ENCODE measurements at regions of chr9 and their contacts with region 1.

Region 1: DNA sequence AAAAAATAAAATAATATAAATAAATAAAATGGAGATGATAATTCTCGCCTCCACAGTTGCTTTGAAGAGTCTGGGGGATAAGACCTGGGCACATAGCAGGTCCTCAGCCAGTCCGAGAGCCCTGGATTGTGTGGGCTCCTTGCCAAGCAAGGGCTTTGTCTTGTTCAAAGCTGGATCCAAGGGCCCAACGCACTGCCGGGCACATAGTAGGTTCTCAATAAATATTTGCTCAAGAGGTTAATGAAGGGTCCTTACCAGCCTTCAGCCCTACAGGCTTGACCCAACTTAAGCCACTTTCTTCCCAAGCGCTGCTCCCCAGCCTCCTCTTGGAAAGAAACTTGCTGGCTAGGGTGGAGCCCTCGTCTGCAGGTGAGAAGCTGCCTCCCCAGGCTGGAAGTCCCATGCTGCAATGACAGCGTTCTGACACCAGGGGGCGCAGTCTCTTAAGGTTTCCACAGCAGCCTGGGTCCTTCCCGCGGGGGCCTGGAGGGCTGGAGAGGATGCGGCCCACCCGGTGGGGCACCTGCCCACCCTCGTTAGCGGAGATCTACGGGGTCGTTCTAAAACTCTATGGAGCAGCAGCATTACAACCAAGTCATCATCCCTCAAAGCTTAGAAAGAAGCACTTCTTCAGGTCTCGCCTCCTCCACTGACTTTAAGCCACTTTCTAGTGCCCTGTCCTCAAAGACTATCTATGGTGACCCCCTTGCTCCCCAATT is 115.2 kb downstream of the LHX2 start:
- DNase-seq: peak; percentile 8
- H3K4me3 ChIP-seq: no peak overlapping the region
- H3K27ac ChIP-seq: no peak overlapping the region
- H3K4me1 ChIP-seq: no peaks in the 10 kb centered on the region
- H3K27me3 ChIP-seq: peaks cover 0 to 9% (median 0%) of the 10 kb centered on the region in 4 donors
- CTCF ChIP-seq: peak; percentile 94 to 99 (median 96)
- POLR2A ChIP-seq: no peak

Region 2: DNA sequence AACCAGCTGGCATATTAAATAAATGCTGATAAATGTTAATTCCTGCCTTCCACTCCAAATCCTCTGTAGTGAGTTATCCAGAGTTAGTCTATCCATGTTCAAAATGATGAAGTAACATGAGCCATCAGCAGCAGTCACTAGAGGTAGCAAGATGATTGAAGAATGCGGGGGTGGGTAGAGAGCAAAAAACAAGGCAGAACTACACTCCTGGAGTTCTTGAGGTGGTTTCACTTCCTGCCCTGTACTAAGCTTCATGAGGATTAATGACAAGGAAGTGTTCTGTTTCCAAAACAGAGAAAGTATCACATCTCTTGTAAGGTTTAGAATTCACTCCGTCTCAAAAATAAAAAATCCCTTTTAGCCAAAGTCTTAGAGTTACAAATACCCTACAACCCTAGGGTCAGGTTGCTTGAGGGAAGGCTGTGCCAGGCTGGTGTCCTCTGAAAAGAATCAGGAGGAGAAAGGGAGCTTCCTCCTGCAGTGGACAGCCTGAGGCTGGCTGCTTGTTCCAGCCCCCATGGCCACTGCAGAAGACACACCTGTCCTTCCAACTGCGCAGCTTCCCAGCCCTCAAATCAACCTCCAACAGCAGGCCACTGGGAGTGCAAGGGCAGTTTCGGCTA is 377.0 kb before region 1 on chr9:
- intact Hi-C with region 1: no loop called
- DNase-seq: no peak
- H3K4me3 ChIP-seq: no peak overlapping the region
- H3K27ac ChIP-seq: no peak overlapping the region
- H3K4me1 ChIP-seq: peaks cover 0 to 8% (median 0%) of the 10 kb centered on the region in 3 donors
- H3K27me3 ChIP-seq: no peaks in the 10 kb centered on the region
- CTCF ChIP-seq: no peak
- POLR2A ChIP-seq: no peak

Region 3: GRCh38 chr9:124309665-124310064 is 182.9 kb after region 1 on chr9:
- intact Hi-C with region 1: no loop called
- DNase-seq: no peak
- H3K4me3 ChIP-seq: no peak overlapping the region
- H3K27ac ChIP-seq: peak overlapping the region in 2 of 4 donors; percentile 3 to 32
- H3K4me1 ChIP-seq: peaks cover 0 to 18% (median 0%) of the 10 kb centered on the region in 3 donors
- H3K27me3 ChIP-seq: no peaks in the 10 kb centered on the region
- CTCF ChIP-seq: no peak
- POLR2A ChIP-seq: no peak

Region 4: GRCh38 chr9:124320062-124320973 is 193.6 kb after region 1 on chr9:
- intact Hi-C with region 1: loop called (anchors 5 kb)
- DNase-seq: no peak
- H3K4me3 ChIP-seq: no peak overlapping the region
- H3K27ac ChIP-seq: no peak overlapping the region
- H3K4me1 ChIP-seq: peaks cover 0 to 9% (median 0%) of the 10 kb centered on the region in 3 donors
- H3K27me3 ChIP-seq: no peaks in the 10 kb centered on the region
- CTCF ChIP-seq: peak; percentile 52 to 88 (median 80)
- POLR2A ChIP-seq: no peak

Region 5: DNA sequence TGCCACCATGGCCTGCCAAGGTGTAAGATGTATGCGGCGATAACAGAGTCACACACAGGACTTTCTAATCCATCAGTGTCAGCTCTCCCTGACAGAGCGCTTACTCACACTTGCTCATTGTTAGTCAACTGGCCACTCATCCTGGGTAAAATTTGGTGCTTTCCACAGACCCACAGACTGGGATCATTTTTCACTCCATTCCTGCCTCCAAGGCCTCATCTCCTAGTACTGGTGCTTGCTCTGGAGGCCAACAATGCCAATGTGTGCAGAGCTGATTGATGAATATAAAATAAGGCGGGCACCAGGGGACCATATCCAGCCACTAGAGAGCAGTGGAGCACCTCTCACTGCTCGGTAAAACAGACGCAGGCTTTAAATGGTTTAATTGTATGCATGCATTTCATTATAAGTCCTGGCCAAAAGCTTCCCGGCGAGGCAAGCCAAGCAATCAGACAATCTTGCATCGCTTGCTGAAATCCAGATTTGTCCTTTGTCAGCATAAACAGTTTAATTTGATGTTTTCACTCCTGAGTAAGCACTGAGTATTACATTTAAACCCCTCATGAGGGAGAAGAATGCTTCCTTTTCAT is 266.2 kb after region 1 on chr9:
- intact Hi-C with region 1: loop called (anchors 10 kb)
- DNase-seq: no peak
- H3K4me3 ChIP-seq: no peak overlapping the region
- H3K27ac ChIP-seq: no peak overlapping the region
- H3K4me1 ChIP-seq: peaks cover 8 to 60% (median 14%) of the 10 kb centered on the region in 3 donors
- H3K27me3 ChIP-seq: no peaks in the 10 kb centered on the region
- CTCF ChIP-seq: peak in 3 of 6 experiments; percentile 13 to 46 (median 35)
- POLR2A ChIP-seq: no peak